Caco-2 (cell line): ENCODE measurements at regions of chr7 and their contacts with region 1.

Region 1: DNA sequence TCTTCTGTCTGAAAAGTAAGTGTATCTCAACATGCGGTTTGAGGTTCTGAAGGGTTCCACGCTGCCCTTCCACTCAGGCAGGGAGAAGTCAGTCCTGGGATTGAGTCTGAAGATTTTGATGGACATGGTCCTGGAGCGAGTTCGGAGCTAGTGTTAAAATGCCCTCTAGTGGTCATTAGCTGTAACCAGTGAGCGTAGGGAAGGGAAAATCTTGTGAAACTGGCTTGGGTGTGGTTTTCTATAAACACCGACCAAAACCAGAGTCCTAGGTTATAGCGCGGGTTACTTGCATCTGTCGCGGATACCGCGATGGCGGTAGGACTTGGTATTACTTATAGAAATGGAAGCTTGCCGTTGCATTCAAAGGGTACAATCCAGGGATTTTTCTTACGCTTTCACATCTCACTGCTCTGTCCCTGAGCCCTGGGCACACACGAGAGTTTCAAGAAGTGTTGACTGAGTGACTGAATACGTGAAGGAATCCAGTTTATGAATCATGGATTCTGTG is 348.2 kb upstream of the C7orf33 start:
- DNase-seq: peak; percentile 55 to 68
- H3K4me3 ChIP-seq: no peak overlapping the region
- H3K4me3 Mint-ChIP-seq: peak overlapping the region; percentile 43
- H3K27ac Mint-ChIP-seq: no peak overlapping the region
- H3K4me1 ChIP-seq: peaks cover 21% of the 10 kb centered on the region
- H3K4me1 Mint-ChIP-seq: peaks cover 16% of the 10 kb centered on the region
- H3K27me3 ChIP-seq: no peaks in the 10 kb centered on the region
- H3K27me3 Mint-ChIP-seq: no peaks in the 10 kb centered on the region
- CTCF ChIP-seq: peak; percentile 76 to 91

Region 2: DNA sequence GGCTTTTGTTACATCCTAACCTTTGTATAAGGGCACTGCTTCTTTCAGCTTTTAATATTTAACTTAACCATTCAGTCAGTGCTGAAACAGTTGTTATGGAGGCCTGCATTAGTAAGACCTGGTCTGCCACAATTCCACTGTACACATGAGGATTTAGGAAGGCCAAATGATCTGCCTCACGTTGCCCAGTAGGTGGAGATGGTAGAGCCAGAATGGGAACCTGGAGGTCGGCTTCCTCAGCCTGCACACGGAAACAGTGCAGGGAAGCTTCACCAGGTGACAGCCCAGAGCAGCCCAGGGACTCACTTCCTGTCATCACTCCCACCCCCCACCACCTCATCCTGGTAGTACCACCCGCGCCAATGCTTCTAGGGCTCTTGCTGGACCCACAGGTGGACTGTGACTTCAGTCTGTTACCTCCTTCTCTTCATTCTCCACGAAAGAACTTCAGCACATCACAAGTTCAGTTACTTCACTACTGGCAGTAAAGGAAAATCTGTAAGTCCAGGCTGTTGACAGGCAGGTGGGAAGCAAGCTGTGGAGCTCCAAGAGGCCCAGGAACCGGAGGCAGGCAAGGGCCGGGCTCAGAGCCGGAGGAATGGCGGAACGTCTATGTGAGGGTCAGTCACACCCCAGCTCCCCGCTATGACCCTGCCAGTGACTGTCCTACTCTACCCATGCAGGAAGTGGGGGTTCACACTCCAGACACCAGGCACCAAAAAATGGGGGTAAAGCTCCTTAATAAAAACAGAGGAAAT is 132.1 kb before region 1 on chr7:
- CTCF ChIA-PET with region 1: interaction called, 5 read pairs
- POLR2A ChIA-PET with region 1: no interaction called
- intact Hi-C with region 1: loop called (anchors 1 kb)
- DNase-seq: peak; percentile 61 to 75
- H3K4me3 ChIP-seq: no peak overlapping the region
- H3K4me3 Mint-ChIP-seq: no peak overlapping the region
- H3K27ac Mint-ChIP-seq: no peak overlapping the region
- H3K4me1 ChIP-seq: peaks cover 14% of the 10 kb centered on the region; the same call in 1 of the 2 replicates
- H3K4me1 Mint-ChIP-seq: no peaks in the 10 kb centered on the region
- H3K27me3 ChIP-seq: no peaks in the 10 kb centered on the region
- H3K27me3 Mint-ChIP-seq: no peaks in the 10 kb centered on the region
- CTCF ChIP-seq: peak; percentile 51 to 56

Region 3: GRCh38 chr7:148230296-148230695 is 12.1 kb before region 1 on chr7:
- CTCF ChIA-PET with region 1: no interaction called
- POLR2A ChIA-PET with region 1: no interaction called
- intact Hi-C with region 1: no loop called
- DNase-seq: no peak
- H3K4me3 ChIP-seq: no peak overlapping the region
- H3K4me3 Mint-ChIP-seq: no peak overlapping the region
- H3K27ac Mint-ChIP-seq: no peak overlapping the region
- H3K4me1 ChIP-seq: no peaks in the 10 kb centered on the region
- H3K4me1 Mint-ChIP-seq: no peaks in the 10 kb centered on the region
- H3K27me3 ChIP-seq: no peaks in the 10 kb centered on the region
- H3K27me3 Mint-ChIP-seq: peaks cover 8% of the 10 kb centered on the region
- CTCF ChIP-seq: no peak

Region 4: GRCh38 chr7:148270586-148270985 is 28.2 kb after region 1 on chr7:
- CTCF ChIA-PET with region 1: no interaction called
- POLR2A ChIA-PET with region 1: no interaction called
- intact Hi-C with region 1: no loop called
- DNase-seq: peak; percentile 58 to 66
- H3K4me3 ChIP-seq: no peak overlapping the region
- H3K4me3 Mint-ChIP-seq: peak overlapping the region; percentile 49
- H3K27ac Mint-ChIP-seq: peak overlapping the region; percentile 54
- H3K4me1 ChIP-seq: peaks cover 30% of the 10 kb centered on the region
- H3K4me1 Mint-ChIP-seq: peaks cover 26% of the 10 kb centered on the region
- H3K27me3 ChIP-seq: no peaks in the 10 kb centered on the region
- H3K27me3 Mint-ChIP-seq: no peaks in the 10 kb centered on the region
- CTCF ChIP-seq: no peak